CD8-positive, alpha-beta T cell (primary cell): ENCODE measurements at regions of chr11 and their contacts with region 1.

Region 1: DNA sequence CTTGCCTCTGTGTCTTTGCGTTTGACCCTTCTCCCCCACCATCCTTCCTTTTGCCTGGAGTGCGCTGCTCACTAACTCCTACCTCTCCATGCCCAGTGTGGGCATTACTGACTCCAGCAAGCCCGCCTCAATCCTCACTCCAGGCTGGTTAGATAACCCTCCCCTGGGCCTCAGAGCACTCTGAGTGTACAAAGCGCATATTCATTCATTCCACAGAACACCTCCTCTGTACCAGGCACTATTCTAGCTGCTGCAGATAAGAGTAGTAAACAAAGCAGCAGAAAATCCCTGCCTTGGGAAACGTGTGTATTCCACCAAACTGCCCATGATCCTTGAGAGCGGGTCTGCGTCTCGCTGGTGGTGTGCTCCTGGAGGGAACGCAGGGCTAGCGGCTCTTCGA is 3.2 kb downstream of the SLC22A8 start:
- DNase-seq: no peak
- ATAC-seq: no peak
- H3K4me3 ChIP-seq: no peak overlapping the region
- H3K4me3 Mint-ChIP-seq: no peak overlapping the region
- H3K27ac ChIP-seq: no peak overlapping the region
- H3K27ac Mint-ChIP-seq: no peak overlapping the region
- H3K4me1 ChIP-seq: no peaks in the 10 kb centered on the region
- H3K4me1 Mint-ChIP-seq: no peaks in the 10 kb centered on the region
- H3K27me3 ChIP-seq: no peaks in the 10 kb centered on the region
- H3K27me3 Mint-ChIP-seq: peaks cover 15% of the 10 kb centered on the region
- CTCF ChIP-seq: no peak

Region 2: GRCh38 chr11:63023841-63024648 is 11.6 kb after region 1 on chr11:
- CTCF ChIA-PET with region 1: interaction called, 35 read pairs
- POLR2A ChIA-PET with region 1: no interaction called
- intact Hi-C with region 1: no loop called
- DNase-seq: peak; percentile 68 to 91 (median 80)
- ATAC-seq: peak; percentile 99
- H3K4me3 ChIP-seq: no peak overlapping the region
- H3K4me3 Mint-ChIP-seq: no peak overlapping the region
- H3K27ac ChIP-seq: no peak overlapping the region
- H3K27ac Mint-ChIP-seq: no peak overlapping the region
- H3K4me1 ChIP-seq: no peaks in the 10 kb centered on the region
- H3K4me1 Mint-ChIP-seq: peaks cover 4% of the 10 kb centered on the region
- H3K27me3 ChIP-seq: peaks cover 0 to 2% of the 10 kb centered on the region in 2 experiments
- H3K27me3 Mint-ChIP-seq: peaks cover 38% of the 10 kb centered on the region
- CTCF ChIP-seq: peak; percentile 100

Region 3: GRCh38 chr11:63132985-63133775 is 120.8 kb after region 1 on chr11:
- CTCF ChIA-PET with region 1: no interaction called
- POLR2A ChIA-PET with region 1: no interaction called
- intact Hi-C with region 1: no loop called
- DNase-seq: no peak
- ATAC-seq: no peak
- H3K4me3 ChIP-seq: no peak overlapping the region
- H3K4me3 Mint-ChIP-seq: no peak overlapping the region
- H3K27ac ChIP-seq: no peak overlapping the region
- H3K27ac Mint-ChIP-seq: no peak overlapping the region
- H3K4me1 ChIP-seq: no peaks in the 10 kb centered on the region
- H3K4me1 Mint-ChIP-seq: no peaks in the 10 kb centered on the region
- H3K27me3 ChIP-seq: no peaks in the 10 kb centered on the region
- H3K27me3 Mint-ChIP-seq: peaks cover 59% of the 10 kb centered on the region
- CTCF ChIP-seq: no peak